HEK293 (cell line): ENCODE measurements at regions of chrX and their contacts with region 1.

Region 1: DNA sequence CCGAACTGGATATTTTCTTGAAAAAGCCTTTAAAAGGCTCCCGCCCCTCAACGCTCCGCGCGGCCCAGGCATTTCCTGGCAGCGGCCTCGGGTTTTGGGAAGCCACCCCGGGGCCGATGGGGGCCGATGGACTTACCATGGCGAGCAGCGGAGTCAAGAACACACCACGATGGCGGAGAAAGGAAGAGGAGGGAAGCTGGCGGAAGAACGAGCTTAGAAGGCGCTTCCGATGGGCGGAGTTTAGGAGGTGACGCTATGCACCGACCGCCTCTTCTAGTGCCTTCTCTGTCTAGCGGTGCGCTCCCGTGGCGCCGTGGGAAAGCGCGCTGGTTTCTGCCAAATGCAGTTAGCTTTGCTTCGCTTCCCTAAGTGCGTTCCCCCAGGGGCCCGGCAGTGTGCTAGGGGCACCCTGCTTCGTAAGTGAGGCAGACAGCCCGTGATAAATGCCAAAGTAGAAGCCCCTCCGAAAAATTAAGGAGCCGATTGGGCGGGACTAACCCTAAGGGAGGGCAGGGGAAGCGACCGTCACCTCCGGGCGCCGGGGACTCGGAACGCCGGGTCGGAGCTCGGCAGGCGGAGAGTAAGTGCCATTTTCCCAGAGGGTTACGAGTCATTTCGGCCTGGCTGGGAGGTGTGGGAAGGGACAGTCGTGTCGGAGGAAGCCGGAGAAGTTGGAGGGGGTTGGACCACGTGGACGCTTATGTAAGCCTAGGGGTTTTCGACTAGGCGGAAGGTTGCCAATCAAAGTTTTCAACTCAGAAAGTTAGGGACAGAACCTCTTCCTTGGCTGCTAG is at the start of gene RPL39:
- H3K4me3 ChIP-seq: peak within 1 kb of the TSS; percentile 77
- H3K27ac ChIP-seq: peak within 1 kb of the TSS; percentile 96
- H3K4me1 ChIP-seq: peaks cover 2% of the 10 kb centered on the region; the same call in 1 of the 2 replicates
- CTCF ChIP-seq: no peak

Region 2: DNA sequence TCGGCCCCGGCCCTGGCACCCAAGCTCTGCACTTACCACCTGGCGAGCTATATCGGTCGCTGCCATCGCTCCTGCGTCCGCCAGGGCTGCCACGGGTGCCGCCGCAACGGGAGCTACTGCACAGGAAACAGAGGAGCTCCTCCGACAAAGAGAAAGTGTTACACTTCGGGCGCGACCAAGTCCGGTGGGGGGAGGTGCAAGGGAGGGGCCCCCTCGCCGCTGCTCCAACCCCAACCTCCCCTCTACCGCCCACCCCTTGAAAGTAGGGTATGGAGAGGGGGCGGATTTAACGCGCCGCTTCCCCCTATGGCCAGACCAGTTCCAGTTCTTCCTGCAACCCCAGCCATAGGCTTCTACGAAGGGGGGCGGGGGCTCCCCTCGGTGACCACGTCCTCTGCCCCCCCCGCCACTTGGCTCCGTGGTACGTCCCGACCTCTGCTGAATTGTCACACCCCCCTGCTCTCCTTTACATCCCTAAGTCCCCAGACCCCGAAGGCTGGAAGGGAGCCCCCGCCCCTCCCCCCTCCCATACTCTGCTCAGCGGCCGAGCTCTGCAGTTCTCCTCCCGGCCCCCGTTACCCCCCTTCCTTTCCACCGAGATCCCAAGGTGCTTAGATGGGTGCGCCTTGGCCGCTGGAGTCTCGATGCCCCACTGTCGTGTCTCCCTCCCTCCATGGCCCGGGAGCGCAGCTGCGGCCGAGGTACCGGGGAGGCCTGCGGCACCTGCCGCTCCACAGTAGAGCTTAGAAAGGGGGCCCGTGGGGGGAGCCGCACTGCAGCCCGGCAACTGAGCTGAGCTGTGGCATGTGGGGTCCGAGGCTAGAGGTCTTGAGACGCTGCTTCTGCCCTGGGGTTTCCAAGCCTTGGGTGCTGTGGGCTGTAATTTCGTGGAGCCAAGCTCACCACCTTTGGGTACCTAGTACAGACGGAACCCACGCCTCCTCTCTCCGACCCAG is 98.3 kb before region 1 on chrX and contains the start of gene SEPTIN6:
- CTCF ChIA-PET with region 1: no interaction called
- POLR2A ChIA-PET with region 1: interaction called, 14 read pairs
- H3K4me3 ChIP-seq: peak within 1 kb of the TSS; percentile 71
- H3K27ac ChIP-seq: peak within 1 kb of the TSS; percentile 60; the same call in 1 of the 2 replicates
- H3K4me1 ChIP-seq: peaks cover 2% of the 10 kb centered on the region; the same call in 1 of the 2 replicates
- CTCF ChIP-seq: peak; percentile 45

Region 3: DNA sequence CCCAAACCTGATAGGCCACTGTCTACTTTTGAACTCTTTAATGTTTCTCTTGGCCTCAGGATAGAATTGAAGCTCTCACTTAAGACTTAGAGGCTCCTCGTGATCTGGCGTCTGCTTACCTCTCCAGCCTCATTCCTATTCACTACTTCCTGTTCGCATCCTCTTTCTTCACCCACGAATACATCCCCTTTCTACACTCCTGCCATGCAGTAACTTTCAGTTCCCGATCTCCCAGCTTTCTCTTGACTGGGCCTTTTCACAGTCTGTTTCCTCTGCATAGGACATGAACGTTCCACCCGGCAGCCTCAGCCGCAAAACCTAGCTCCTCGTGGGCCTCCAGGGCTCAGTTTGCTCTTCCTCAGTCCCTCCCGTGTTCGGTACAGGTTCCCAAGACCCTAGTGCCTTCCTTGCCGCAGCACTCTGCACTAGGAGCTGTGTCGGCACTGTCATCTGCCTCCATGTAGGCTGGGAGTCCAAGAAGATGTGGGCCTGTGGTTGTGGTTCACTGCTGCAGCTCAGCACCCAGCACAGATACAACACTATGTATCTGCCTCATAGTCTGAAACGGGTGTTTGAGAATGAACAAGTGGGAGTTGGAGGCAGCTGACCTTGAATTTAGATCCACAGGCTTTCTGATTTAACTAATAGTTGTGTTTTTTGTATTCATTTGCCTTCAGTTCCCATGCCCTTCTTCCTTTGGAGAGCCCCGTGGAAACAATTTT is 16.0 kb before region 1 on chrX:
- CTCF ChIA-PET with region 1: no interaction called
- POLR2A ChIA-PET with region 1: interaction called, 19 read pairs
- H3K4me3 ChIP-seq: no peak overlapping the region
- H3K27ac ChIP-seq: no peak overlapping the region
- H3K4me1 ChIP-seq: no peaks in the 10 kb centered on the region
- CTCF ChIP-seq: no peak

Region 4: GRCh38 chrX:119871599-119872395 is 80.2 kb after region 1 on chrX and contains the starts of genes NDUFA1 and RNF113A:
- CTCF ChIA-PET with region 1: interaction called, 3 read pairs
- POLR2A ChIA-PET with region 1: interaction called, 31 read pairs
- H3K4me3 ChIP-seq: peak within 1 kb of the TSS; percentile 59
- H3K27ac ChIP-seq: peak within 1 kb of the TSS; percentile 90
- H3K4me1 ChIP-seq: no peaks in the 10 kb centered on the region
- CTCF ChIP-seq: no peak